Vagina (tissue), 2 donors: ENCODE measurements at regions of chr3 and their contacts with region 1.

Region 1: DNA sequence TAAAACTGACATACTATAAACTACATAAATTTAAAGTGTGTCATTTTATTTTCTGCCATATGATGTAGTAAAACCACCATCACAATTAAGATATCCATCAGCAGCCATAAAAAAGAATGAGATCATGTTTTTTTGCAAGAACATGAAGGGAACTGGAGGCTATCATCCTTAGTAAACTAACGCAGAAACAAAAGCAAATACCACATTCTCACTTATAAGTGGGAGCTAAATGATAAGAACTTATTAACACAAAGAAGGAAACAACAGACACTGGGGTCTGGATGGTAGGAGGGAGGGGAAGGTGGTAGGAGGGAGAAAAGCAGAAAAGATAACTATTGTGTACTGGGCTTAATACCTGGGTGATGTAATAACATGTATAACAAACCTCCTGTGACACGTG is 24.6 kb downstream of the CCDC14 start:
- DNase-seq: no peak
- H3K4me3 ChIP-seq: no peak overlapping the region
- H3K27ac ChIP-seq: no peak overlapping the region
- H3K4me1 ChIP-seq: no peaks in the 10 kb centered on the region
- H3K27me3 ChIP-seq: no peaks in the 10 kb centered on the region
- CTCF ChIP-seq: no peak
- POLR2A ChIP-seq: no peak

Region 2: GRCh38 chr3:123986427-123986826 is 50.0 kb after region 1 on chr3:
- intact Hi-C with region 1: loop called (anchors 5 kb)
- DNase-seq: peak in 1 of 2 donors; percentile 78
- H3K4me3 ChIP-seq: no peak overlapping the region
- H3K27ac ChIP-seq: no peak overlapping the region
- H3K4me1 ChIP-seq: no peaks in the 10 kb centered on the region
- H3K27me3 ChIP-seq: no peaks in the 10 kb centered on the region
- CTCF ChIP-seq: no peak
- POLR2A ChIP-seq: no peak